Right ventricle myocardium superior (tissue), 1 donor: ENCODE measurements at regions of chr2 and their contacts with region 1.

Region 1: DNA sequence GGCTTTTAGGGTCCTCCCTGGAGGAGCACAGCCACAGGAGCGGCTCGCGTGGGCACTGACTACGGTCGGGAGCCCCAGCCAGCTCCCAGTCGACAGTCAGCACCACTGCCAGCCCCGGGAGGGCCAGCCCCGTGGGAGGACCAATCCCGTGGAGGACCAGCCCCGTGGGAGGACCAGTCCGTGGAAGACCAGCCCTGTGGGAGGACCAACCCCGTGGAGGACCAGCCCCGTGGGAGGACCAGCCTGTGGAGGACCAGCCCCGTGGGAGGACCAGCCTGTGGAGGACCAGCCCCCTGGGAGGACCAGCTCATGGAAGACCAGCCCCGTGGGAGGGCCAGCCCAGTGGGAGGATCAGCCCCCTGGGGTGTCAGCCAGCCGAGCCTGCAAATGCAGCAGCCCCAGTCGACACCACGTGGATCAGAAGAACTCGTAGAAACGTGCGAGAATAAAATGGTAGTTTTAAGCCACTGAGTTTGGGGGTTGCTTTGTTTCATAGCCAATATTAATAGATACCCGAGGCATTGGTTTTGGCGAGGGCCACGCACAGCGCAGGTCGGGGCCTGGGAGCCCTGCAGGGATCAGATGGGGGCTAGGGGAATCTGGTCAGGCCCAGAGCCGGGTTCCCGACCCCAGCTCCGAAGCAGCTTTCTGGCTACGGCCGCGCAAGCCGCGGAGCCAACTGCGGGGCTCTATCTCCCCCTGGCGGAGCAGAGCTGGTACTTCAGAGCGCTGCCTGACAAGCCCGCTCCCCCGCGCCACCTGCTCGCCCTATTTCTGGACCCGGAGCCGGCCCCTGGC is 73.0 kb downstream of the TEX51 start:
- DNase-seq: peak; percentile 77
- ATAC-seq: peak; percentile 94

Region 2: GRCh38 chr2:125745514-125745913 is 1226.2 kb before region 1 on chr2:
- intact Hi-C with region 1: loop called (anchors 10 kb)
- DNase-seq: no peak
- ATAC-seq: no peak

Region 3: DNA sequence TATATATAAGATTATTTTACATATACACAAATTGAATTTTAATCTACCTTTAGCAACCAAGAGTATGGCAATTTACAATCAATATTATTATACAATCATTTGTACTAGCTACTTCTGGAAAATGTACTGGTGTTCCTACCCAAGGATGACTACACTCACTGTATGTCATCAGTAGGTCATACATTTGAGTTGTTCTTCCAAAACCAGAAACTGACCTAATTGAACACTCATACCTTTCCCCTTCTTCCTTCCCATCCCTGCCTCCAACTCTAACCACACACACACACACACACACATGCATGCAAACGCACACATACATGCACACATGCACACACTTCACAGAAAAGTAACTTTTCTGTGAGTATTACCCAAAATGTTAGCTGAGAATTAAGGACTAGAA is 330.5 kb after region 1 on chr2:
- intact Hi-C with region 1: no loop called
- DNase-seq: no peak
- ATAC-seq: no peak